ENCODE measurements at regions of chr11 and their contacts with region 1.

Region 1: DNA sequence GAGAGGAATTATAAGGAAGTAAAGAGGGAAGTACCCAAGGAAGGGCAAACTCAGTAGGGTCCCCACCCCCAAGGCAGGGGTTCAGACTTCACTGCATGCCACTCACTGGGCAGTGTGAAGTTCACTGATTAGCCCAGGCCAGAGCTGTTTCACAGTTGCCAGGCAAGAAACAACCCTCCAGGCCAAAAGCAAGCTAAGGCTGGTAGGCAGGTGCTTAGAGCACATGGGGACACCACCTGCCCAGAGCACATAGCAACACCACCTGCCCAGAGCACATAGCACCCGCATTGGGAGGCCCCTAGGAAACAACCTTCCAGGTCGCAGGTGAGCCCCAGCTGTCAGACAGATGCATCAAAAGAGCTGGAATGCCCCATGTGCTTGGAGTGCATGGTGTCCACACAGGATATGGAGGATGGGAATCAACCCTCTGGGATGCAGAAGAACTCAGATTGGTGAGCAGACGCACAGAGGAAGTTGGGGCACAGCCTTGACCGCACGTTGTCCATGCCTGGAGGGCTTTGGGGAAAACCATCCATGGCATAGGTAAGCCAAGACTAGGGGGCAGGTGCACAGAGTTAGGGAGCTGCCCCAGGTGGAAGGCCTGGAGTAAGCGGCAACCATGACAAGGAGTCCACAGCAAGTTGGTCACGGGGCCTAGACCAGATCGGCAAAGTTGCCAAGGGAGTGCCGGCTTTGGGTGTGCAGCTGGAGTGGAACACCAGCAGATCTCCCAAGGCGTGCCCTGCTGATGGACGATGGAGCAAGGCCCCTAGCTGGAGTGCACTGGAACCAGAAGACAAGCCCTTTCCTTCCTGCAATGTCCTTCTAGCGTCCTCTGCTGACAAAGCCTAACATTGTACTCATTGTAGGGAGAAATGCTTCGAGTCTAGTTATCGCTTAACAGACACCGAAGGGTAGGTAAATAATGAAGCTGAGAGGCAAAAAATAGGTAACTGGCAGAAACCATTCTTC is 7.8 kb upstream of the TMEM216 start:
- DNase-seq: no peak
- ATAC-seq: peak in 1 of 2 donors; percentile 35
- H3K4me3 ChIP-seq: no peak overlapping the region
- H3K27ac ChIP-seq: no peak overlapping the region
- H3K4me1 ChIP-seq: no peaks in the 10 kb centered on the region
- H3K27me3 ChIP-seq: no peaks in the 10 kb centered on the region

Region 2: GRCh38 chr11:61129639-61130523 is 254.7 kb before region 1 on chr11:
- intact Hi-C with region 1: no loop called
- DNase-seq: peak; percentile 84 to 94 (median 94)
- ATAC-seq: peak; percentile 79 to 85
- H3K4me3 ChIP-seq: no peak overlapping the region
- H3K27ac ChIP-seq: no peak overlapping the region
- H3K4me1 ChIP-seq: no peaks in the 10 kb centered on the region
- H3K27me3 ChIP-seq: no peaks in the 10 kb centered on the region

Region 3: DNA sequence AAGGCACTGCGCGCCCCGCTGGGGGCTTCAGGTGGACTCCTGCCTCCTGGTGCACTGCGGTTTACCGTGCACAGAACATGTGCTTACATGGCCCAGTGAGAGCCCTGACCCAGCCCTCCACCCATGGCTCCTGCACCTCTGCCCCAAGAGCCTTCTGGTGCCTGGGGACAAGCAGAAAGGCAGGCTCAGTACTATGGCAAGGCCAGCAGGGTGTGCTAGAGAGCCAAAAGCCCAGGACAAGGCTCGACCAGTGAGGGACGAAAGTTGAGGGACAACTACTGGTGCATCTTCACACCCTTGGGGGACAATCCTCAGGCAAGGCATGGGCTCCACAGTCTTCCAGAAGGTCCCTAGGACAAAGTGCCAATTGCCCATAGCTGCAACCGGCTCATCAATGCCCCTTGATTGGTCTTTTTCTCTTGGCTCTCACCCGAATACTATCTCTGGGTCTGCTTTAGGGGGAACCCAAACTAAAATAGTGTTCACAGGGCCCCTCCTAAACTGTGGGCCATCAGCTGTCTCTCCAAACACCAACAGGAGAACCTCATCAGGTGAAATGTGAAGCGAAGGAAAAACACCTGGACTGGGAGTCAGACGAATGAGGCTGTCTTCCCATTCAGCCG is 130.0 kb before region 1 on chr11:
- intact Hi-C with region 1: loop called in 2 of 4 experiments (anchors 10 kb)
- DNase-seq: peak; percentile 41 to 76 (median 74)
- ATAC-seq: peak; percentile 57 to 73
- H3K4me3 ChIP-seq: no peak overlapping the region
- H3K27ac ChIP-seq: no peak overlapping the region
- H3K4me1 ChIP-seq: no peaks in the 10 kb centered on the region
- H3K27me3 ChIP-seq: no peaks in the 10 kb centered on the region

Region 4: GRCh38 chr11:61336171-61336922 is 48.2 kb before region 1 on chr11:
- intact Hi-C with region 1: loop called (anchors 2 to 5 kb)
- DNase-seq: peak; percentile 75 to 91 (median 90)
- ATAC-seq: peak; percentile 46 to 63
- H3K4me3 ChIP-seq: no peak overlapping the region
- H3K27ac ChIP-seq: no peak overlapping the region
- H3K4me1 ChIP-seq: peaks cover 2% of the 10 kb centered on the region
- H3K27me3 ChIP-seq: no peaks in the 10 kb centered on the region